HepG2 (cell line): ENCODE measurements at regions of chr6 and their contacts with region 1.

Region 1: DNA sequence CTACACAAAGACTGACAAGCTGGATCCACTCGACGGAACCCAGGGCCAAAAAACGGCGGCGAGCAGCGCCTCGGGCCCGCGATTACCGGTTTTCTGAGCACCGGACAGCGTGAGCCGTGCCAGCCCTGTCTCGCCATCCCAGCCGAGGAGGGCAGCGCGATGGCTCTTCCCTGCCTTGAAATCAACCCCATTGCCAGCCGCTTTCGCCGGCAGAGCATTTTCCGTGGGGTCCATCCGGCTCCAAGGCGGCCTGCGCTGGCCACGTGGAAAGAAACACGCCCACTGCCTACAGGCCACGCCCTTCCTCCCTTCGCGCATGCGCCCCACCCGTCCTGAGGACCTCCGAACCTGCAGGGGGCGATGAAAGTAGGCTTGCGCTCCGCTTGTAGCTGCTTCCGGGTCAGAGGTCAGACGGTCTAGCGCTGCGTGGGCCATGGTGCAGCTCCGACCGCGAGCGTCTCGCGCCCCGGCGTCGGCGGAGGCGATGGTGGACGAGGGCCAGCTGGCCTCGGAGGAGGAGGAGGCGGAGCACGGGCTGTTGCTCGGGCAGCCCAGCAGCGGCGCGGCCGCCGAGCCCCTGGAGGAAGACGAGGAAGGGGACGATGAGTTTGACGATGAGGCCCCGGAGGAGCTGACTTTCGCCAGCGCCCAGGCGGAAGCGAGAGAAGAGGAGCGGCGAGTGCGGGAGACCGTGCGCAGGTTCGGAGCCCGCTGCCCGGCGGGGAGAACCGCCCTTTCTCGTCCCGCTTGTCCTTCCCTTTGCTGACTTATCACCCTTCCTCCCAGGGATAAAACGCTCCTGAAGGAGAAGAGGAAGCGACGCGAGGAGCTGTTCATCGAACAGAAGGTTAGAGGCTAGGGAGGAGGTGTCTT is at the start of gene NOL7:
- DNase-seq: peak; percentile 97
- ATAC-seq: peak; percentile 92
- H3K4me3 ChIP-seq: peak within 1 kb of the TSS; percentile 89 to 97 (median 93)
- H3K27ac ChIP-seq: peak within 1 kb of the TSS; percentile 91
- H3K4me1 ChIP-seq: peaks cover 35% of the 10 kb centered on the region
- H3K27me3 ChIP-seq: no peaks in the 10 kb centered on the region; a peak in 1 of 5 replicates
- CTCF ChIP-seq: peak; percentile 100
- EP300 ChIP-seq: peak in 1 of 2 experiments; percentile 11; a peak in 1 of 4 replicates
- POLR2A ChIP-seq: peak; percentile 93 to 96
- RAD21 ChIP-seq: peak; percentile 55; the same call in 1 of the 2 replicates
- total RNA-seq, gene NOL7: 186 and 215 TPM in 2 replicates

Region 2: GRCh38 chr6:13487122-13488014 is 127.8 kb before region 1 on chr6 and contains the start of gene GFOD1:
- CTCF ChIA-PET with region 1: no interaction called
- POLR2A ChIA-PET with region 1: interaction called, 11 read pairs
- in situ Hi-C with region 1: no loop called
- intact Hi-C with region 1: loop called (anchors 2 kb)
- DNase-seq: peak; percentile 63
- ATAC-seq: peak; percentile 80
- H3K4me3 ChIP-seq: peak within 1 kb of the TSS; percentile 69 to 82 (median 80)
- H3K27ac ChIP-seq: peak within 1 kb of the TSS; percentile 25
- H3K4me1 ChIP-seq: peaks cover 47% of the 10 kb centered on the region
- H3K27me3 ChIP-seq: no peaks in the 10 kb centered on the region; a peak in 1 of 5 replicates
- CTCF ChIP-seq: no peak
- EP300 ChIP-seq: no peak
- POLR2A ChIP-seq: peak; percentile 44 to 70; a peak in 3 of 4 replicates
- RAD21 ChIP-seq: peak; percentile 76
- total RNA-seq, gene GFOD1: 6.4 TPM in 2 replicates

Region 3: GRCh38 chr6:13554929-13555333 is 60.2 kb before region 1 on chr6:
- CTCF ChIA-PET with region 1: no interaction called
- POLR2A ChIA-PET with region 1: no interaction called
- in situ Hi-C with region 1: no loop called
- intact Hi-C with region 1: no loop called
- DNase-seq: no peak
- ATAC-seq: peak; percentile 38
- H3K4me3 ChIP-seq: no peak overlapping the region
- H3K27ac ChIP-seq: no peak overlapping the region
- H3K4me1 ChIP-seq: peaks cover 25% of the 10 kb centered on the region
- H3K27me3 ChIP-seq: 0 out of 5 replicates have a peak, but pooled peaks cover 0 to 1% of the 10 kb centered on the region in 2 experiments
- CTCF ChIP-seq: no peak
- EP300 ChIP-seq: no peak
- POLR2A ChIP-seq: no peak
- RAD21 ChIP-seq: no peak

Region 4: GRCh38 chr6:13604546-13605416 is 10.4 kb before region 1 on chr6:
- CTCF ChIA-PET with region 1: interaction called, 6 read pairs
- POLR2A ChIA-PET with region 1: interaction called, 175 read pairs
- in situ Hi-C with region 1: no loop called
- intact Hi-C with region 1: loop called (anchors 1 kb)
- DNase-seq: peak; percentile 100
- ATAC-seq: peak; percentile 94
- H3K4me3 ChIP-seq: peak overlapping the region in 2 of 3 experiments; percentile 32 to 46; a peak in 2 of 6 replicates
- H3K27ac ChIP-seq: peak overlapping the region; percentile 87
- H3K4me1 ChIP-seq: peaks cover 44% of the 10 kb centered on the region
- H3K27me3 ChIP-seq: no peaks in the 10 kb centered on the region
- CTCF ChIP-seq: no peak
- EP300 ChIP-seq: peak; percentile 97 to 99
- POLR2A ChIP-seq: peak in 1 of 2 experiments; percentile 46; a peak in 1 of 4 replicates
- RAD21 ChIP-seq: peak; percentile 9; the same call in 1 of the 2 replicates

Region 5: DNA sequence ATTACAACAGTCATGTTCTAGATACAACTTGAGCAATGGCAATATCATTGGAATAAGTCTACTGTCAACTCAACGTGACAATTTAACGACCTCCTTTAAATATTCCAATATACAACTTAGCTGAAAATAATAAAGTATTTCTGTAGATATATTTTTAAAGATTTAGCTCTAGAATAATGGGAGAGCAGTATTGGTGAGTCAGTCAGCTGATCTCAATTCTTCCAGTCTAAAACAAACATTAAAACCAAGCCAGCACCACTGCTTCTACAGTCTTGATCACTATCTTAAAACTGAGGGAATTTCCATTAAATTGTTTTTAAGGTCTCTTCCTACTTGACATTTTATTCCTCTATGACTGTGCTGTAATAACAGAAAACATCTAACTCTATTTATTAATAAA is 38.1 kb after region 1 on chr6:
- CTCF ChIA-PET with region 1: no interaction called
- POLR2A ChIA-PET with region 1: no interaction called
- in situ Hi-C with region 1: no loop called
- intact Hi-C with region 1: no loop called
- DNase-seq: no peak
- ATAC-seq: no peak
- H3K4me3 ChIP-seq: no peak overlapping the region
- H3K27ac ChIP-seq: no peak overlapping the region
- H3K4me1 ChIP-seq: no peaks in the 10 kb centered on the region
- H3K27me3 ChIP-seq: no peaks in the 10 kb centered on the region
- CTCF ChIP-seq: no peak
- EP300 ChIP-seq: no peak
- POLR2A ChIP-seq: no peak
- RAD21 ChIP-seq: no peak

Region 6: DNA sequence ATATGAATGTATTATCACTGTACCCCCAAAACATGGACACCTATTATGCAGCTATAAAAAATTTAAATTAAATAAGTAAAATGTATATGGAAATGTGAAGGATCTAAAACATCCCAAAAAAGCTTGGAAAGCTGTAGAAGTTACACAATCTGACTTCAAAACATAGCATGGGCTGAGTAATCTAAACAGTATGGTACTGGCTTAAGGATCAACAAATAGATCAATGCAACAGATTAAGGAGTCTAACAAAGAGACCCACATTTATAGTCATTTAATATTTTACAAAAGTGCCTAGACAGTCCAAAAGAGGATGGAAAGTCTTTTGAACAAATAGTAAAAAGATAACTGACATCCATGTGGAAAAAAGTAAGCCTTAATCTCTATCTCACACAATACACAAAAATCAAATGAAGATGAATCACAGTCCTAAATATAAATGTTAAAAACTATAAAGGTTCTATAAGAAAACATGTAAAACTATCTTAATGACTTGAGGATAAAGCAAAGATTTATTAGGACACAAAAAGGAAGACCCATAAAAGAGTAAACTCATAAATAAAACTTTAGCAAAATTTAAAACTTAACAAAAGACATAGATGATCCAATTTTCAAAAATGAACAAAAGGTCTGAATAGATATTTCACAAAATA is 49.7 kb after region 1 on chr6:
- CTCF ChIA-PET with region 1: no interaction called
- POLR2A ChIA-PET with region 1: interaction called, 14 read pairs
- in situ Hi-C with region 1: no loop called
- intact Hi-C with region 1: loop called (anchors 5 kb)
- DNase-seq: peak; percentile 65
- ATAC-seq: peak; percentile 66
- H3K4me3 ChIP-seq: no peak overlapping the region
- H3K27ac ChIP-seq: peak overlapping the region; percentile 12
- H3K4me1 ChIP-seq: peaks cover 85% of the 10 kb centered on the region
- H3K27me3 ChIP-seq: no peaks in the 10 kb centered on the region
- CTCF ChIP-seq: no peak
- EP300 ChIP-seq: peak in 1 of 2 experiments; percentile 84; a peak in 2 of 4 replicates
- POLR2A ChIP-seq: no peak
- RAD21 ChIP-seq: no peak